Heart left ventricle (tissue), 16 donors: ENCODE measurements at regions of chr6 and their contacts with region 1.

Region 1: DNA sequence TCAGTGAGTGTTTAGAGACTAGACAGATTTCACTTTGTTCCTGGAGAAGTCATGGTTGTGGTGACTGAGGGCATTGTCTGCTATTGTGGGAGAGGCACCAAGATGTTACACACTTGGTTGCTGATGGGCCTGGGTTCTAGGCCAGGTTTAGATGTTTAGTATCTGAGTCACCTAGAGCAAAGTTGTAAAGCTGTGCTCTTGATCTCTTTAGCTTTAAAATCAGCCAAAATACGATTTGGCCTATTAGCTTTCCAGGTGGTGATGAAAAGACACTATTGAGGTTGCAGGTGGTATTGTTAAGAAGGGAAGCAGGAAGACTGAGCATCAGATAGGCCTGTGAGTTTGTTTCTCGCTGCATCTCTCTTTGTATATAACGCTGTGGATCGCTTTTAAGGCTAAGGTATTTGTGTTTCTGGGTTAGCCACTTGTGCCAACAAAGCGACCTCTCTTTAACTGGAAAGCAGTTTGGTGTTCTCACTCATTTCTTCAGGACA is 48.6 kb downstream of the FOXO3 start:
- DNase-seq: no peak
- ATAC-seq: peak; percentile 18 to 87 (median 56)
- H3K4me3 ChIP-seq: no peak overlapping the region
- H3K27ac ChIP-seq: peak overlapping the region; percentile 8 to 73 (median 39)
- H3K4me1 ChIP-seq: peaks cover 13 to 88% (median 65%) of the 10 kb centered on the region in 12 donors
- H3K27me3 ChIP-seq: no peaks in the 10 kb centered on the region
- CTCF ChIP-seq: no peak
- POLR2A ChIP-seq: no peak

Region 2: DNA sequence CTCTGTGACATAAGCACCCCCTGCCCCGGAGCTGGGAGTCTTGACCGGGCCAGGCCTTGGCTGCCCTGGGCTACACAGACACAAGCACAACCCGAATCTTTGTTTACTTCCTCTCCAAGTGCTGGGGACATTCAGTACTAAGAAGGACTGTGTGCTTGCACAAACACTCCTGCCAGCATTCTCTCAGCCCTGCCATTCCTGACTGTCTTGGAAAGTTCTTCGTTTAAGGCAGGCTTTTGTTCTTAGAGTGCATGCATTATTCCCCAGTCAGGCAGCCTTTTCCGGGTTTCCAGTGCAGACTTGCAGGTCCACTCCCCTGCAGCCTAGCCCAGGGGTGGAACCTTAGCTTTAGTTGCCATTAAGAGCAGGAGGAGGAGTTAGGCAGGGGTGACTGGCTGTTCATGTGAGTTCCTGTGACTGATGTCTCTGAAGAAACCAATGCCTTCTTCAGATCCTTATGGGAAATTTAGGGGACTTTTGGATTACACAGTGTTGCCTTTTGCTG is 20.0 kb before region 1 on chr6:
- intact Hi-C with region 1: loop called in 1 of 10 experiments (anchors 2 kb)
- DNase-seq: peak; percentile 54 to 79 (median 71)
- ATAC-seq: peak; percentile 85 to 91 (median 88)
- H3K4me3 ChIP-seq: peak overlapping the region in 5 of 12 donors; percentile 0 to 21 (median 7)
- H3K27ac ChIP-seq: peak overlapping the region; percentile 46 to 89 (median 80)
- H3K4me1 ChIP-seq: peaks cover 45 to 98% (median 96%) of the 10 kb centered on the region in 12 donors
- H3K27me3 ChIP-seq: no peaks in the 10 kb centered on the region
- CTCF ChIP-seq: no peak
- POLR2A ChIP-seq: peak in 1 of 2 donors; percentile 41

Region 3: GRCh38 chr6:108622641-108623298 is 13.4 kb after region 1 on chr6:
- intact Hi-C with region 1: loop called in 1 of 10 experiments (anchors 2 kb)
- DNase-seq: peak in 2 of 5 donors; percentile 24 to 49
- ATAC-seq: peak in 3 of 4 donors; percentile 62 to 86 (median 82)
- H3K4me3 ChIP-seq: no peak overlapping the region
- H3K27ac ChIP-seq: peak overlapping the region in 7 of 12 donors; percentile 24 to 77 (median 33)
- H3K4me1 ChIP-seq: peaks cover 25 to 100% (median 93%) of the 10 kb centered on the region in 12 donors
- H3K27me3 ChIP-seq: no peaks in the 10 kb centered on the region
- CTCF ChIP-seq: peak in 1 of 12 donors; percentile 5
- POLR2A ChIP-seq: no peak